ENCODE measurements at regions of chr3 and their contacts with region 1.

Region 1: GRCh38 chr3:33883538-33883950 is 85.1 kb downstream of the PDCD6IP start:
- DNase-seq: peak; percentile 66
- H3K4me3 ChIP-seq: no peak overlapping the region
- H3K27ac ChIP-seq: no peak overlapping the region
- H3K4me1 ChIP-seq: no peaks in the 10 kb centered on the region
- H3K27me3 ChIP-seq: peaks cover 0 to 7% of the 10 kb centered on the region in 2 experiments
- CTCF ChIP-seq: peak; percentile 47 to 48
- POLR2A ChIP-seq: no peak

Region 2: DNA sequence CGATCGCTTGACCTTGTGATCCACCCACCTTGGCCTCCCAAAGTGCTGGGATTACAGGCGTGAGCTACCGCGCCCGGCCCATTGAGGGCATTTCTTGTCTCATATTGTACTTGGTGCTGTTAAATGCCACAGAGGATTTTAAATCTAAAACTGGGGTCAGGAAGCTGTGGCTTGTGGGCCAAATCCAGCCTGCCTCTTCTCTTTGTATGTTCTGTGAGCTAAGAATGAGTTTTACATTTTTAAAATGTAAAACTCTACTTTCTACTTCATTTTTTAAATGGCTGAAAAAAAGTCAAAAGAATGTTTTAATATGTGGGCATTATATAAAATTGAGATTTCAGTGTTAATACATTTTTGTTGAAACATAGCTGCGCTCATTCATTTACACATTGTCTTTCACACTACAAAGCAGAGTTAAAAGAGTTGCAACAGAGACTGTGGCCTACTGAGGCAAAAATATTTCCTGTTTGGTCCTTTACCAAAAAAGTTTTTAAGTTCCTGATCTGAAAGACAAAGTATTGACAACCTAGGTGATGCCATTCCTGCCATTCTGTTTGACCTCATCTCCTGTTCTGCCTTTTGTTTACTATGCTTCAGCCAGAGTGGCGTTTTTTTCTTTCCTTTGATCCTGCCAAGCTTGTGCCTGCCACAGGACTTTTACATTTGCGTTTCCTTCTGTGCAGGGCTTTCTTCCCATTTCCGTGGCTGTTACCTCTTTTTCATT is 34.8 kb before region 1 on chr3:
- CTCF ChIA-PET with region 1: no interaction called
- POLR2A ChIA-PET with region 1: no interaction called
- dilution Hi-C with region 1: no loop called
- intact Hi-C with region 1: no loop called
- DNase-seq: peak; percentile 43
- H3K4me3 ChIP-seq: no peak overlapping the region
- H3K27ac ChIP-seq: no peak overlapping the region
- H3K4me1 ChIP-seq: peaks cover 12% of the 10 kb centered on the region
- H3K27me3 ChIP-seq: no peaks in the 10 kb centered on the region
- CTCF ChIP-seq: no peak
- POLR2A ChIP-seq: no peak

Region 3: GRCh38 chr3:33898901-33899300 is 15.4 kb after region 1 on chr3:
- CTCF ChIA-PET with region 1: interaction called, 12 read pairs
- POLR2A ChIA-PET with region 1: no interaction called
- dilution Hi-C with region 1: no loop called
- intact Hi-C with region 1: no loop called
- DNase-seq: no peak
- H3K4me3 ChIP-seq: no peak overlapping the region
- H3K27ac ChIP-seq: no peak overlapping the region
- H3K4me1 ChIP-seq: no peaks in the 10 kb centered on the region
- H3K27me3 ChIP-seq: peaks cover 4 to 6% of the 10 kb centered on the region in 2 experiments
- CTCF ChIP-seq: no peak
- POLR2A ChIP-seq: no peak

Region 4: GRCh38 chr3:33980252-33980651 is 96.7 kb after region 1 on chr3:
- CTCF ChIA-PET with region 1: interaction called, 13 read pairs
- POLR2A ChIA-PET with region 1: no interaction called
- dilution Hi-C with region 1: no loop called
- intact Hi-C with region 1: no loop called
- DNase-seq: peak; percentile 31
- H3K4me3 ChIP-seq: no peak overlapping the region
- H3K27ac ChIP-seq: no peak overlapping the region
- H3K4me1 ChIP-seq: no peaks in the 10 kb centered on the region
- H3K27me3 ChIP-seq: peaks cover 0 to 2% of the 10 kb centered on the region in 2 experiments
- CTCF ChIP-seq: peak; percentile 41 to 44
- POLR2A ChIP-seq: no peak

Region 5: DNA sequence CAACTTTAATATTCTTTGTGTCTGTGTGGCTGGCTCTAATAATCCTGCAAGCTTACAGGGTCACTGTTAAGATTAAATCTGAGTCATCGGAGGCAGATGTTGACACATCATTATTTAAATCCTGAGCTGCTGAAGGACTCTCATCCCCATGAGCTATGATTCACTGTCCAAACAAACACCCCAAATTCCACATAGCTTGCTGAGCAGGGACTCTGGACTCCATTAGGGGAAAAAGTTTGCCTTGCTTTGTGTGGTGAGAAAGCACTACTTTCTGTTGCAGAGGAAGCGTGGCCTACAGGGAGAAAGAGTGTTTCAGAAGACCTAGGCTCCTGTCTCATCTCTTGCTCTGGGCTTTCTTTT is 128.5 kb after region 1 on chr3:
- CTCF ChIA-PET with region 1: interaction called, 14 read pairs
- POLR2A ChIA-PET with region 1: no interaction called
- dilution Hi-C with region 1: no loop called
- intact Hi-C with region 1: loop called (anchors 1 kb)
- DNase-seq: peak; percentile 74
- H3K4me3 ChIP-seq: no peak overlapping the region
- H3K27ac ChIP-seq: no peak overlapping the region
- H3K4me1 ChIP-seq: peaks cover 12% of the 10 kb centered on the region
- H3K27me3 ChIP-seq: no peaks in the 10 kb centered on the region
- CTCF ChIP-seq: no peak
- POLR2A ChIP-seq: no peak

Region 6: DNA sequence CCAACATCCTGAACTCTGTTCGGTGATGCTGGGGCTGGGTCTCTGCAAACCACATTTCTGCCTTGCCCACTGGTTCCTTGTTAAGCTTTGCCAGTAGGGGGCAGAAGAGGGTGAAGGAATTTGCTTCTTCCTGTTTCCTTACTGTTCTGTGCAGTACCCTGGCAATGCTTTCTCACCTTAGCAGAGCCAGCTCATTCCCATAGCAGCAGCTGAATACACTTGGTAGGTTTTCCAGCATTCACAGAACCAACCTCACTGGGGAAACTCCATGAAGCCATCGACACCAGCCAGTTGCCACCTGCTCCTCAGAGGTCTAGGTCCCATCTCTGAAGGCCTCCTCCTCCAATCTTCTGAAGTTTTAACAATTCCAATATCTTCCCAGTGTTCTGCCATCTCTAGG is 223.3 kb after region 1 on chr3:
- CTCF ChIA-PET with region 1: interaction called, 23 read pairs
- POLR2A ChIA-PET with region 1: no interaction called
- dilution Hi-C with region 1: no loop called
- intact Hi-C with region 1: loop called (anchors 2 kb)
- DNase-seq: peak; percentile 79
- H3K4me3 ChIP-seq: no peak overlapping the region
- H3K27ac ChIP-seq: no peak overlapping the region
- H3K4me1 ChIP-seq: no peaks in the 10 kb centered on the region
- H3K27me3 ChIP-seq: peaks cover 6 to 9% of the 10 kb centered on the region in 2 experiments
- CTCF ChIP-seq: peak; percentile 78 to 86
- POLR2A ChIP-seq: no peak

Region 7: DNA sequence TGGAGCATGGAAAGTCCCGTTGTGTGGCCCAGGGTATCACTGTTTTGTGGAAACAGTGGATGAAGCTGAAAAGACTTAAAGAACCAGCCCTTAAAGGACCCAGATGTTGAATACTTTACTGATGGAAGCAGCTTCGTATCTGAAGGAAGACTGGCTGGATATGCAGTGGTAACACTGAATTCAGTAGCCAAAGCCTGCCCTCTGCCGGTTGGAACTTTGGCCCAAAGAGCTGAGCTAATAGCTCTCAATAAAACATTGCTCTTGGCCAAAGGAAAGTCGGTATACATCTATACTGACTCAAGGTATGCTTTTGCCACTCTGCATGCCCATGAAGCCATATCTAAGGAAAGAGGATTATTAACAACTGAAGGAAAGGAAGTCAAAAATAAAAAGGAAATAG is 800.3 kb after region 1 on chr3:
- CTCF ChIA-PET with region 1: interaction called, 203 read pairs
- POLR2A ChIA-PET with region 1: no interaction called
- dilution Hi-C with region 1: no loop called
- intact Hi-C with region 1: loop called (anchors 1 kb)
- DNase-seq: peak; percentile 42
- H3K4me3 ChIP-seq: no peak overlapping the region
- H3K27ac ChIP-seq: no peak overlapping the region
- H3K4me1 ChIP-seq: no peaks in the 10 kb centered on the region
- H3K27me3 ChIP-seq: no peaks in the 10 kb centered on the region
- CTCF ChIP-seq: peak; percentile 39 to 58
- POLR2A ChIP-seq: no peak